ENCODE measurements at regions of chr5 and their contacts with region 1.

Region 1: DNA sequence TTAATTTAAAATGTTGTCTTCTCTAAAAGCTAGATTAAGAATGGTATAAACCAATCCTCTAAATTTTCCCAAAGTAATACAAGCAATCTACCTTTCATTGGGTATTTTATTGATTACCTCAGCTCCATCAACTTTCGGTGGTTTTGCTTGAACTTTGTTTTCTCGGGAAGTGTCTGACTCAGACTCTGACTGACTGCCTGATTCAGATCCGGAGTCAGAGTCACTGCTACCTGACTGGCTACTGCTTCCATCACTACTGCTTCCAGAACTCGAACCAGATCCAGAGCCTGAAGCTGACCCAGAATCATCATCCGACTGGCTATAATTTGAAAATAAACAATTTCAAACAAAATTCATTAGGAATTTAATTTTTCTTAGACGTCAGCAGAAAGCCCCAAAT is 24.0 kb downstream of the CHD1 start:
- DNase-seq: no peak
- H3K4me3 Mint-ChIP-seq: no peak overlapping the region
- H3K27ac Mint-ChIP-seq: peak overlapping the region; percentile 50
- H3K4me1 Mint-ChIP-seq: peaks cover 33% of the 10 kb centered on the region
- H3K27me3 Mint-ChIP-seq: no peaks in the 10 kb centered on the region

Region 2: DNA sequence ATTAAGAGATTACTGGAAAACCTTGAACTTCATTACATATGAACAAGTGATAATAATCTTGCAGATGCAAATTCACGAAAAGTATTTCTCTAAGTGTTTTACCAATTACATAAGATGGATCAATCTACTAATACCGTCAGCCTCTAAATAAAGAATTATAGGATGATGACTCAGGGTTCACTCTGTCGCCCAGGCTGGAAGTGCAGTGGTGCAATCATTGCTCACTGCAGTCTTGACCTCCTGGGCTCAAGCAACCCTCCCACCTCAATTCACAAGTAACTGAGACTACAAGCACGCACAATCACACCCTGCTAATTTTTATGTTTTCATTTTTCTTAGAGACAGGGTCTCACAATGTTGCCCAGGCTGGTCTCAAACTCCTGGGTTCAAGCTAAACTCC is 32.1 kb before region 1 on chr5:
- CTCF ChIA-PET with region 1: no interaction called
- POLR2A ChIA-PET with region 1: no interaction called
- DNase-seq: no peak
- H3K4me3 Mint-ChIP-seq: no peak overlapping the region
- H3K27ac Mint-ChIP-seq: no peak overlapping the region
- H3K4me1 Mint-ChIP-seq: peaks cover 2% of the 10 kb centered on the region
- H3K27me3 Mint-ChIP-seq: no peaks in the 10 kb centered on the region

Region 3: GRCh38 chr5:99060306-99061261 is 155.8 kb after region 1 on chr5:
- CTCF ChIA-PET with region 1: interaction called, 10 read pairs
- POLR2A ChIA-PET with region 1: no interaction called
- DNase-seq: peak; percentile 90
- H3K4me3 Mint-ChIP-seq: no peak overlapping the region
- H3K27ac Mint-ChIP-seq: no peak overlapping the region
- H3K4me1 Mint-ChIP-seq: peaks cover 6% of the 10 kb centered on the region
- H3K27me3 Mint-ChIP-seq: peaks cover 10% of the 10 kb centered on the region

Measured in activated CD4-positive, alpha-beta T cell treated with anti-CD3 and anti-CD28 coated beads, Interleukin-2, amount 10 ng/mL, durations not matched to agents 7 days and 5 days (primary cell).